ENCODE measurements at regions of chr12 and their contacts with region 1.

Region 1: GRCh38 chr12:76455582-76456345 is 103.8 kb downstream of the OSBPL8 start:
- DNase-seq: peak; percentile 14 to 66
- H3K4me3 ChIP-seq: no peak overlapping the region
- H3K4me1 ChIP-seq: peaks cover 7% of the 10 kb centered on the region
- H3K27me3 ChIP-seq: no peaks in the 10 kb centered on the region

Region 2: DNA sequence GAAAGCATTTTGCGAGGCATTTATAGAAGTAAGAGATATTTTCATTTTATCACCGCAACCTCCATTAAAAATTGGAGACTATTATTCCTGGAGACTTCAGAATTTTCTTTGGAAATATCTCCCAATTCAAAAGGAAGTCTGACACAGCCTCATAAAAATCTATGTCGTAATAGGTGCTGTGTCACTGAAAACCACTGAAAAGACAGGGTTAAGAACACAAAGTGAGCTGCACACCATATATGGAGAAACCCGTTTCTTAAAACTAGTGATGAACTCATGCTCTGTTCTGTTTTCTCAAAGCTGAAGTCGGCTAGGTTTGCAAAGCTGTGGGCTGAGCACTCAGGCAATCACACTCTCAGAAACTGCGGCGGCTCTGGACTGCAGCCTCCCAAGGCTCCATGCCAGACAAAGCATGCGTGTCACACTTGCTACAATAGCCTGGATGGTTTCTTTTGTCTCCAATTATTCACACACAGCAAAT is 975.3 kb before region 1 on chr12 and contains the start of gene GLIPR1:
- in situ Hi-C with region 1: loop called (anchors 25 kb)
- DNase-seq: peak; percentile 17 to 46
- H3K4me3 ChIP-seq: no peak within 1 kb of the TSS
- H3K4me1 ChIP-seq: peaks cover 6% of the 10 kb centered on the region
- H3K27me3 ChIP-seq: no peaks in the 10 kb centered on the region

Region 3: DNA sequence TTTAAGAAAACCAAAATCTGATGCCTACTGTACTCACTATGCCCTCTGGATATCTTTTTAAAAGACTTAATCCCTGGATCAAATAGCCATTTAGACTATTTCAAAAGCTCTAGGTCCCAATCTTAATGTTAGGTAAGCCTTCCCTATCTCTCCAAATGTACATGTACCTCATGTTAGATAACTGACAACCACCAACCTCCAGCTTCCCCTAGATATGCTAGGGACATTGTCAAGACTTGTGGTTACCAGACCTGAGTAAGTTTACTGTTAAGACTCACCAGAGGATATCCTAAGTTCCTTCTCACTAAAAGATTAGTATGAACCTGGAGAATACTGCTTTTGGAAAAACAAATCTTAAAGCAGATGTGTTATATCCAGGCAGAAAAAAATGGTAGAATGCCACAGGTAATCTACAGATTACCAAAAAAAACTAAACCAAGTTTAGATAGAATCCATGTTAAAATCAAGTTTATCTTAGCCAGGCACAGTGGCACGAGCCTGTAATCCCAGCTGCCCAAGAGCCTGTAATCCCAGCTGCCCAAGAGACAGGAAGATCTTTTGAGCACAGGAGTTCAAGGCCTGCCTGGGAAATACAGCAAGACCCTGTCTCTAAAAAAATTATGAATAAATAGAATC is 380.9 kb before region 1 on chr12:
- in situ Hi-C with region 1: loop called (anchors 25 kb)
- DNase-seq: no peak
- H3K4me3 ChIP-seq: no peak overlapping the region
- H3K4me1 ChIP-seq: peaks cover 4% of the 10 kb centered on the region; the same call in 1 of the 2 replicates
- H3K27me3 ChIP-seq: no peaks in the 10 kb centered on the region